ENCODE measurements at regions of chr13 and their contacts with region 1.

Region 1: GRCh38 chr13:103022328-103022727 is 43.9 kb downstream of the SLC10A2 start:
- DNase-seq: no peak
- ATAC-seq: no peak
- H3K4me3 ChIP-seq: no peak overlapping the region
- H3K27ac ChIP-seq: no peak overlapping the region
- H3K4me1 ChIP-seq: peaks cover 0 to 16% (median 0%) of the 10 kb centered on the region in 12 donors
- H3K27me3 ChIP-seq: no peaks in the 10 kb centered on the region
- CTCF ChIP-seq: no peak
- POLR2A ChIP-seq: no peak

Region 2: GRCh38 chr13:103033999-103034398 is 11.7 kb after region 1 on chr13:
- intact Hi-C with region 1: loop called in 1 of 10 experiments (anchors 1 kb)
- DNase-seq: no peak
- ATAC-seq: no peak
- H3K4me3 ChIP-seq: no peak overlapping the region
- H3K27ac ChIP-seq: no peak overlapping the region
- H3K4me1 ChIP-seq: no peaks in the 10 kb centered on the region
- H3K27me3 ChIP-seq: no peaks in the 10 kb centered on the region
- CTCF ChIP-seq: no peak
- POLR2A ChIP-seq: no peak